Body of pancreas (tissue), 4 donors: ENCODE measurements at regions of chr9 and their contacts with region 1.

Region 1: DNA sequence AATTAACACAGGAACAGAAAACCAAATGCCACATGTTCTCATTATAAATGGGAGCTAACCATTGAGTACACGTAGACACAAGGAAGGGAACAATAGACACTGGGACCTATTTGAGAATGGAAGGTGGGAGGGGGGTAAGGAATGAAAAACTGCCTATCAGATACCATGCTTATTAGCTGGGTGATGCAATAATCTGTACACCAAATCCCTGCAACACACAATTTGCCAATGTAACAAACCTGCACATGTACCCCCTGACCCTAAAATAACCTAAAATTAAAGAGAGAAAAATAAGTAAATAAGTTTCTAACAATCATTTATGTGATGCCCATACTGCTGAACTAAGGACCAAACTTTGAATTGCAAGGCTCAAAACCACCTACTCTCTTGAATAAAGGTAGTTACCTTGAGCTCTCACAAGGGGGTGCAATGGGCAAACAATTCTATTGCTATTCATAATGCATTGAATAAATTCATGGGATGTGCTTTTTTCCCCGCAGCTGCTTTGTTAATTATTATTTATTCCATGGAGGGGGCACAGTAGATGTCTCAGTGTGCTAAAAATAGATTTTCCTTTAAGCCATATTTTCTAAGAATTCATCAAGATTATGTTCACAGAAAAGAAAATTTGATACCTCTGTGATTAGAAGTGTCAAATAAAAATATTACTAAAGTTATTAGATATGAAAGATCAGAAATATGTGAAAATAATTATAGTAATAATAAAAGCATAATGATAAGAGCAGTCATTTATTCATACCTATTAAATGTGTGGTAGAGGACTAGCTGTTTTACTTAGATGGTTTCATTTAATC is 76.2 kb upstream of the PTPN3 start:
- DNase-seq: peak; percentile 25 to 42 (median 32)
- ATAC-seq: peak; percentile 47
- H3K4me3 ChIP-seq: no peak overlapping the region
- H3K27ac ChIP-seq: no peak overlapping the region
- H3K4me1 ChIP-seq: no peaks in the 10 kb centered on the region
- H3K27me3 ChIP-seq: no peaks in the 10 kb centered on the region
- CTCF ChIP-seq: peak; percentile 27 to 72 (median 58)
- POLR2A ChIP-seq: no peak

Region 2: DNA sequence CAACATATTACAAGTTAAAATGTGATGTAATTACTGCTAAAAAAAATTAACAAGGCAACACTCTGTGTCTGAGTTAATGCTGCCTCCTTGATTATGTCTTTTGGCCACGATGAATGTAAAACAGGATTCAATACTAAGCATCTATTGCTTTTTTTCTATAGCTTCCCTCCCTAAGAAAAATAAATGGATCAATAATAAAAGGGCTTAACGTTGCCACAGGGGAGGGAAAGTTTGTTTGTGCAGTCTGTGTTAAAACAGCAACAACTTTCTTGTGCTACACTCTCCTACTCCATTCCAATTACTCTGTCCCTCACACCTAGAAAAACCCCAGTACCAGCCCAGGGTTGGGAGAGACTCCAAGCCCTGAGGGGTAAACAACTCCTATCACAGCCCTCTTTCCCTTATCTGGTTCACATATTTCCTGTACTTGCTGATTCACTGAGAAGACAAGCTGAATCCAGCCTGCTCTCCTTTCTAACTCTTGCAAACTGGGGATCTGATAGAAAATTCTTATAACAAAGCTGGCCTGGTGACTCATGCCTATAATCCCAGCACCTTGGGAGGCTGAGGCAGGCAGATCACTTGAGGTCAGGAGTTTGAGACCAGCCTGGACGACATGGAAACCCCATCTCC is 120.9 kb before region 1 on chr9:
- intact Hi-C with region 1: no loop called
- DNase-seq: peak in 1 of 4 donors; percentile 41
- ATAC-seq: peak; percentile 77
- H3K4me3 ChIP-seq: no peak overlapping the region
- H3K27ac ChIP-seq: peak overlapping the region in 2 of 4 donors; percentile 3 to 37
- H3K4me1 ChIP-seq: peaks cover 8% of the 10 kb centered on the region
- H3K27me3 ChIP-seq: no peaks in the 10 kb centered on the region
- CTCF ChIP-seq: no peak
- POLR2A ChIP-seq: no peak

Region 3: GRCh38 chr9:109817846-109818472 is 243.7 kb after region 1 on chr9:
- intact Hi-C with region 1: loop called (anchors 10 kb)
- DNase-seq: peak; percentile 74 to 86 (median 78)
- ATAC-seq: peak; percentile 85
- H3K4me3 ChIP-seq: no peak overlapping the region
- H3K27ac ChIP-seq: peak overlapping the region in 1 of 4 donors; percentile 13
- H3K4me1 ChIP-seq: no peaks in the 10 kb centered on the region
- H3K27me3 ChIP-seq: no peaks in the 10 kb centered on the region
- CTCF ChIP-seq: peak; percentile 70 to 91 (median 88)
- POLR2A ChIP-seq: no peak